ENCODE measurements at regions of chr2 and their contacts with region 1.

Region 1: DNA sequence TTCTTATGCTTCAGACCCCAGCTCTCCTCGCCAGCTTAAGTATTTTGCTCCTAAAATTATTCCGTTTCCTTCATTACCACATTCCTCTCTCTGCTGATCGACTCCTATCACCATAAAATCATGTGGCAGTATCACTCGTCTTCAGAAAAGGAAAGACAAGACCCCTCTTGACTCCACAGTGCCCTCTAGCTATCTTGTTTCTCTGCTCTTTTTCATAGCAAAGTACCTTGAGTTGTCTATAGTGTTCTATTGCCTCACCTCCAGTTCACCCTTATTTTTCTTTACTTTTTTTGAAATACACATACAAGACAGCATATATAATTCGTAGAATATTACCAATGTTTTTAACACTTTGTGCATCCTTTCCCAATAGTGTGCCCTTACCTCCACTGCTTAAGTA is 273.2 kb upstream of the SIX3 start:
- H3K4me3 ChIP-seq: no peak overlapping the region
- H3K27ac ChIP-seq: no peak overlapping the region
- H3K4me1 ChIP-seq: peaks cover 9% of the 10 kb centered on the region
- CTCF ChIP-seq: no peak; the same call in 1 of the 2 replicates

Region 2: GRCh38 chr2:44361330-44362206 is 306.8 kb before region 1 on chr2 and contains the starts of genes CAMKMT and PREPL:
- CTCF ChIA-PET with region 1: no interaction called
- POLR2A ChIA-PET with region 1: no interaction called
- H3K4me3 ChIP-seq: peak within 1 kb of the TSS; percentile 68
- H3K27ac ChIP-seq: peak within 1 kb of the TSS; percentile 97
- H3K4me1 ChIP-seq: peaks cover 6% of the 10 kb centered on the region; the same call in 1 of the 2 replicates
- CTCF ChIP-seq: no peak

Region 3: DNA sequence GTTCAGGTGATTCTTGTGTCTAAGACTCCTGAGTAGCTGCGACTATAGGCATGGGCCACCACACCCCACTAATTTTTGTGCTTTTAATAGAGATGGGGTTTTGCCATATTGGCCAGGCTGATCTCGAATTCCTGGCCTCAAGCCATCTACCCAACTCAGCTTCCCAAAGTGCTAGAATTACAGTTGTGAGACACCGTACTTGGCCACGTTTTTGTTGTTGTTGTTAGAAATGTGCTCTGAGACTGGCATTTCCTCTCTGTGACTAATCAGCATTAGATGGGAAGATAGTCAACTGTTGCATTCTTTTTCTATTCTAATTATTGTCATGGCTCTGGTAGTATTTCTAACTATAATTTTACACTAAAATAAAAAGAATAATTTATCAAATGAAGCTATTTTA is 114.9 kb before region 1 on chr2:
- CTCF ChIA-PET with region 1: no interaction called
- POLR2A ChIA-PET with region 1: no interaction called
- H3K4me3 ChIP-seq: no peak overlapping the region
- H3K27ac ChIP-seq: no peak overlapping the region
- H3K4me1 ChIP-seq: no peaks in the 10 kb centered on the region
- CTCF ChIP-seq: no peak

Region 4: DNA sequence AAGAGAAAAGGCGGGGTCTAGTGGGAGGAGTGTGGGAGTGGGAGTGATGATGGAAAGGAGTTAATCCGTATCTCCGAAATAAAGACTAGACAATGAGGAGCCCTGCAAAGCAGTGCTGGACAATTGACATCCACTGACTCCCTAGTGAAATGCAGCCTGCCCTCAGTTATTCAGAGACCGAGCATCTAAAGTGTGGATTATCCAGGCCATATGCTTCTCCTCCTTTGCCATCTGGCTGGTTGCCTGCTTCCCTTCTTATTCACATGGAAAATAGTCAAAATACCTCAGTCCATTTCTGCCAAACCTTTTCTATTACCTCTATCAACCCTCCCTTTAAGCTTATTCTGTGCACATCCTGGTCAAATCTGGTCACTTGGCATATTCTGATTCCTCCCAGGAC is 15.6 kb before region 1 on chr2:
- CTCF ChIA-PET with region 1: interaction called, 11 read pairs
- POLR2A ChIA-PET with region 1: no interaction called
- H3K4me3 ChIP-seq: no peak overlapping the region
- H3K27ac ChIP-seq: no peak overlapping the region
- H3K4me1 ChIP-seq: peaks cover 13% of the 10 kb centered on the region; the same call in 1 of the 2 replicates
- CTCF ChIP-seq: no peak

Measured in HEK293 (cell line).